Heart right ventricle (tissue), 16 donors: ENCODE measurements at regions of chr20 and their contacts with region 1.

Region 1: GRCh38 chr20:58650776-58651558 is at the start of gene STX16:
- DNase-seq: peak; percentile 89 to 92
- ATAC-seq: peak; percentile 94 to 98 (median 97)
- H3K4me3 ChIP-seq: peak within 1 kb of the TSS; percentile 75 to 99 (median 95)
- H3K27ac ChIP-seq: peak within 1 kb of the TSS; percentile 89 to 98 (median 95)
- H3K4me1 ChIP-seq: peaks cover 0 to 55% (median 42%) of the 10 kb centered on the region in 9 donors
- H3K27me3 ChIP-seq: no peaks in the 10 kb centered on the region
- CTCF ChIP-seq: peak in 8 of 9 donors; percentile 38 to 87 (median 64)
- total RNA-seq, gene STX16: 25.3 to 33.9 (median 27.0) TPM

Region 2: DNA sequence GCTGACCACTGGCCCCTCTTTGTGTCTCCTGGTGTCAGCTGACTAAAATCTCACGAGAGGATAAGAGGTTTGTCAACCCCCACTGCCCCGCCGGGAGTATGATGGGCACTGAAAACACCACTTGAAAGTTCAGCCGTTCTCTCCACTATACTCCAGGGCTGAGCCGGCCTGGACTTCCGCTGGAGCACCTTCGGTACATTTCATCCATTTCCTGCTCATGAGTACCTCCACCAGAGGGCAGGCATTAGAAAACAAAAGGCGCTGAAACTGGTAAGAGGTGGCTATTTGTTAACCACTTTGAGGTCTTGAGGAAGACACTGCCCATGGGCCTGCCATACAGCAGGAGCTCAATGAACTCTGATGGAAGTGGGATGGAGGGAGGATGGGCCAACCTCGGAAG is 404.6 kb before region 1 on chr20:
- intact Hi-C with region 1: loop called in 2 of 10 experiments (anchors 10 kb)
- DNase-seq: no peak
- ATAC-seq: no peak
- H3K4me3 ChIP-seq: no peak overlapping the region
- H3K27ac ChIP-seq: no peak overlapping the region
- H3K4me1 ChIP-seq: peaks cover 0 to 6% (median 0%) of the 10 kb centered on the region in 9 donors
- H3K27me3 ChIP-seq: no peaks in the 10 kb centered on the region
- CTCF ChIP-seq: peak in 6 of 9 donors; percentile 21 to 38 (median 31)

Region 3: DNA sequence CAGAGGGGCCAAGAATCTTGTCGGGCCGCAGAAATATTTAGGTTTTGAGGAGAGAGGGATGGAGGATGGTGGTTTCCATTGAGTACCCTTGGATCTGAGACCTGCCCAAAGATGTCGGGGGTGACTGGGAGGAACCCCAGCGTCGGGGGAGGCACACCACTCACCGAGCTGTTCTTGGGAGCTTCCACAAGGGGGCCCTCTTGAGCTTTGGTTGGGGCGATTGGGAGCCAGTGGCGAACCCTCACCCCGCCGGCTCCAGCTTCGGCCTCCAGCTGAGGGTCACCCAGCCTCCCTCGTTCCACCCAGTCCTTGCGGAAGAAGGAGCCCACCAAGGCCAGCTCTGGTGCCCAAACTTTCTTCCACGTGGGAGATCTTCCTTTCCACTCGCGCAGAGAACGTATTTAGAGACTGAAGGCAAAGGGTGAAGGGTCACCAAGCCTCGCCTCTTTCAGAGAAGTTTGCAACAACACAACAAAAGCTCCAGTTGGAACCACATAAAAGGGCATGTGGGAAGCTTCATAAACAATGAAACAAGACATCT is 169.4 kb before region 1 on chr20:
- intact Hi-C with region 1: loop called in 2 of 10 experiments (anchors 10 kb)
- DNase-seq: peak; percentile 36 to 38
- ATAC-seq: peak in 6 of 8 donors; percentile 21 to 70 (median 60)
- H3K4me3 ChIP-seq: no peak overlapping the region
- H3K27ac ChIP-seq: peak overlapping the region in 4 of 10 donors; percentile 28 to 57 (median 39)
- H3K4me1 ChIP-seq: peaks cover 0 to 8% (median 0%) of the 10 kb centered on the region in 9 donors
- H3K27me3 ChIP-seq: peaks cover 0 to 6% (median 0%) of the 10 kb centered on the region in 7 donors
- CTCF ChIP-seq: peak in 8 of 9 donors; percentile 18 to 58 (median 45)

Region 4: DNA sequence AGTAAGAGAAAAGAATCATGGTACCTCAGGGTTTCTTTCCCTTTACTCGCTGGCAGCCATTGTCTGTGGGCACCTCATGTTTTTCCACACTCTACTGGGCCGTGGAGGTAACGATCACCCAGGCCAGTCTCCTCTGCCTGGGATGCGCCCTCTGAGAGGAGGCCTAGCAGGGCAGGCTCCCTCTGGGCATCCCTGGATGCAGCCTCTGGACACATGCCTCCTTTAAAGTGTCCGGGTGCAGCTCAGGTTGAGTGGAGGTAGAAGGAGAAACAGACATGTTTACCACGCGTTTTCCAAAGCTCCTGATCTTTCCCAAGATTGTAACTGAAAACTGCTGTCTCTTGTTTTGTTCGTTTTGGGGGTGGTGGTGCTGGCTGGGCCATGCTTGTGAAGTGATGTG is 27.8 kb after region 1 on chr20:
- intact Hi-C with region 1: no loop called
- DNase-seq: no peak
- ATAC-seq: no peak
- H3K4me3 ChIP-seq: no peak overlapping the region
- H3K27ac ChIP-seq: no peak overlapping the region
- H3K4me1 ChIP-seq: no peaks in the 10 kb centered on the region
- H3K27me3 ChIP-seq: no peaks in the 10 kb centered on the region
- CTCF ChIP-seq: no peak

Region 5: DNA sequence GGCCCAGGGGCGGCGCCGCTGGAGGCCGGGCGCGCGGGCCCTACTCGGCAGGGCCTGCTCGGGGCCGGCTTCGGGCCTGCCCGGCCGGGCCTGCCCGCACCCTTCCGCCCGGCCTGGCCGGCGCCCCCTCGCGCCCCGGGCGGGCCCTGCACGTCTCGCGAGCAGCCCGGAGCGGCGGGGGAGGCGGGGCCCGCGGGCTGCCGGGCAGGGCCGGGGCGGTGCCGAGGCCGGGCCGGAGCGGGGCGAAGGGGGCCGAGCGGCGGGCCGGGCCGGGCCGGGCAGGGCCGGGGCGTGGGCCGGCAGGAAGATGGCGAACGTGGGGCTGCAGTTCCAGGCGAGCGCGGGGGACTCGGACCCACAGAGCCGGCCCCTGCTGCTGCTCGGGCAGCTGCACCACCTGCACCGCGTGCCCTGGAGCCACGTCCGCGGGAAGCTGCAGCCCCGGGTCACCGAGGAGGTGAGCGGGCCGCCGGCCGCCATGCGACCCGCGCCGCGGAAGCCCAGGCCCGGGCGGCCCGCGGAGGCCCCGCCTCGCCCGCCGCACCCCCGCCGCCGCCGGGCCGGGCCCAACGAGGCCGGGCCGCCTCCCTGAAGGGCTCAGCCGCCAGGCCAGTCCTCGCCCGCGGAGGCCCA is 41.7 kb after region 1 on chr20 and contains the start of gene NPEPL1:
- intact Hi-C with region 1: loop called in 7 of 10 experiments (anchors 2 to 5 kb)
- DNase-seq: peak; percentile 50 to 79
- ATAC-seq: peak; percentile 69 to 95 (median 86)
- H3K4me3 ChIP-seq: peak within 1 kb of the TSS in 9 of 10 donors; percentile 50 to 69 (median 59)
- H3K27ac ChIP-seq: peak within 1 kb of the TSS; percentile 74 to 99 (median 94)
- H3K4me1 ChIP-seq: peaks cover 14 to 47% (median 36%) of the 10 kb centered on the region in 9 donors
- H3K27me3 ChIP-seq: no peaks in the 10 kb centered on the region
- CTCF ChIP-seq: peak in 2 of 9 donors; percentile 25 to 33
- total RNA-seq, gene NPEPL1: 23.1 to 35.9 (median 29.9) TPM

Region 6: DNA sequence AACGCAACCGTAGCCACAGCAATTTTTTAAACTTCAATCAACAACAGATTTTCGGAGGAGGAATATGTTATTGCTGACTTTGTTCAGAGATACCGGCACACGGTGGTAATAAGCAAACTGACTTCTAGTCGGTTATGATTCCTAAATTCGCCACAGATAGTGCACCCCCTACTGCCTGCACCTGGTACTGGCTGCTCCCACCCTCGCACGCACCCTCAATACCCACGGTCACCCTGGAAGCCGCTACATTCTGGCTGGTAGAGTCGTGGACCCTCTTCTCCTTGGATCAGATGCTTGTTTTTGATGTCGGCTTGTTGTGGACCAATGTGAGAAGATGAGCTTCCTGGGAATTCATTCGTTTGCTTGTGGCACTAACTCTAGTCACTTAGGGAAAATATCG is 52.3 kb after region 1 on chr20:
- intact Hi-C with region 1: no loop called
- DNase-seq: no peak
- ATAC-seq: no peak
- H3K4me3 ChIP-seq: no peak overlapping the region
- H3K27ac ChIP-seq: no peak overlapping the region
- H3K4me1 ChIP-seq: peaks cover 0 to 5% (median 0%) of the 10 kb centered on the region in 9 donors
- H3K27me3 ChIP-seq: no peaks in the 10 kb centered on the region
- CTCF ChIP-seq: peak in 2 of 9 donors; percentile 14 to 29

Region 7: DNA sequence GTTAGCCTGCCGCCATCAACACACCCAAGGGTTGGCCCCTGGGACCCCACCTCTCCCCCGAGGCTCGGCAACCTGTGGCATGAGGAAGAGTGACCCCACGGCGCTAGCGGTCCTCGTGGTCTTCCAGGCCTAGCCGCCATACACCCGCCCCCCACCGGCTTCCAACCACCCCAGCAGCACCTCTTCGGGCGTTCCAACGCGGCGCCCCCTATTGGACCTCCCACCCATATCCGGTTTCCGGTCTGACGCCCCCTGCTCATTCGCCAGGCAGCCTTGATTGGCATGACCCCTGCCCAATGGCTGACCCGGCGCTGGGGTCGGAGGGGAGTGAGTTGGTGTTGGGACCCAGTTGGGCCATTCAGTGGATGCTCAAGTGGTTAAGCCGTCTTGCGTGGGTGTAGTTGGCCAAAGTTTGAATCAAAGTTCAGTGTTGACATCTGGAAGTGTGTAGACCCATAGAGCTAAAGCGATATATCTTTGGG is 199.8 kb after region 1 on chr20 and contains the start of gene GNAS-AS1:
- intact Hi-C with region 1: loop called in 5 of 10 experiments (anchors 5 to 10 kb)
- DNase-seq: peak; percentile 85 to 87
- ATAC-seq: peak; percentile 74 to 93 (median 88)
- H3K4me3 ChIP-seq: peak within 1 kb of the TSS; percentile 28 to 64 (median 54)
- H3K27ac ChIP-seq: no peak within 1 kb of the TSS
- H3K4me1 ChIP-seq: peaks cover 0 to 30% (median 19%) of the 10 kb centered on the region in 9 donors
- H3K27me3 ChIP-seq: peaks cover 2 to 89% (median 58%) of the 10 kb centered on the region in 7 donors
- CTCF ChIP-seq: peak in 2 of 9 donors; percentile 8 to 12
- total RNA-seq, gene GNAS-AS1: 0.15 to 1.5 (median 0.41) TPM

Region 8: DNA sequence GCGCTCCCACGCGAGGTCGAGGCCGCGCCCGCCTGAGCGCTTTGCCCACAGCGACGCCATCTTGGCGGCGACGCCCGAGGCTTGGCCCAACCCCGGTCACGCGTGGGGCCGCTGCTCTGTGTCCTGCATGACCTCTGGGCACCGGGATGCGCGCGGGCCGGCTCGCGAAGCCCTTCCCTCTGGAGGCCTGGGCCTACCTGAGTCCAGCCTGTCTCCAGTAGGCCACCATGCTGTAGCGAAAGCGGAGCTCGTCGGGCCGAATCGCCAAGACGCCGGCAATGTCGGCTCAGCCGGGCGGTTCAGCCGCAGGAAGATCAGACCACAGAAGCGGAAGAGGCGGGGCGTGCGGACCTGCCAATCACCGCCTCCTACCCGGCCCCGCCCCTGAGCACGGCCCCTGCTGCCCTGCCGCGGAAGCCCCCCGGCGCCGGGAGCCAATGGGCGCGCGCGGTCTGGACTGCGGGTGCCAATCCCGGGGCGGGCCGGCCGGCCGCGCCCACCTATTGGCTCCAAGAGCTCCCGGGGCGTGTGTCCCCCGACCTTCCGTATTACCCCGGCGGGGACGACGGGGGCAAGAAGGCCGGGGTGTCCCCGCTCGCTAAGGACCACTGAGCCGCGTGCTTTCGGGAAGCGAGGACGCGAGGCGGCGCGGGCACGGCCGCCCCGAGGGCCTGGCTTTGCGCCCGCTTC is 381.2 kb after region 1 on chr20 and contains the start of gene ATP5F1E:
- intact Hi-C with region 1: loop called in 1 of 10 experiments (anchors 10 kb)
- DNase-seq: peak; percentile 95 to 97
- ATAC-seq: peak; percentile 99 to 100 (median 100)
- H3K4me3 ChIP-seq: peak within 1 kb of the TSS; percentile 55 to 96 (median 82)
- H3K27ac ChIP-seq: peak within 1 kb of the TSS; percentile 83 to 96 (median 94)
- H3K4me1 ChIP-seq: peaks cover 17 to 56% (median 47%) of the 10 kb centered on the region in 9 donors
- H3K27me3 ChIP-seq: no peaks in the 10 kb centered on the region
- CTCF ChIP-seq: no peak
- total RNA-seq, gene ATP5F1E: 105 to 155 (median 121) TPM